MCF 10A (cell line): ENCODE measurements at regions of chr15 and their contacts with region 1.

Region 1: GRCh38 chr15:99565299-99566156 is at the start of gene MEF2A:
- DNase-seq: peak; percentile 90
- H3K4me3 Mint-ChIP-seq: peak within 1 kb of the TSS; percentile 98
- H3K27ac Mint-ChIP-seq: peak within 1 kb of the TSS; percentile 89
- H3K4me1 Mint-ChIP-seq: peaks cover 10% of the 10 kb centered on the region
- H3K27me3 Mint-ChIP-seq: no peaks in the 10 kb centered on the region
- CTCF ChIP-seq: no peak
- total RNA-seq, gene MEF2A: 52.9 and 55.2 TPM in 2 replicates

Region 2: GRCh38 chr15:99409097-99409473 is 156.4 kb before region 1 on chr15:
- CTCF ChIA-PET with region 1: interaction called, 7 read pairs
- POLR2A ChIA-PET with region 1: interaction called, 7 read pairs
- intact Hi-C with region 1: loop called (anchors 1 kb)
- DNase-seq: peak; percentile 74
- H3K4me3 Mint-ChIP-seq: no peak overlapping the region
- H3K27ac Mint-ChIP-seq: no peak overlapping the region
- H3K4me1 Mint-ChIP-seq: peaks cover 12% of the 10 kb centered on the region
- H3K27me3 Mint-ChIP-seq: no peaks in the 10 kb centered on the region
- CTCF ChIP-seq: peak; percentile 56

Region 3: GRCh38 chr15:99442252-99442897 is 123.2 kb before region 1 on chr15:
- CTCF ChIA-PET with region 1: no interaction called
- POLR2A ChIA-PET with region 1: interaction called, 14 read pairs
- intact Hi-C with region 1: no loop called
- DNase-seq: peak; percentile 90
- H3K4me3 Mint-ChIP-seq: peak overlapping the region; percentile 60
- H3K27ac Mint-ChIP-seq: peak overlapping the region; percentile 88
- H3K4me1 Mint-ChIP-seq: peaks cover 28% of the 10 kb centered on the region
- H3K27me3 Mint-ChIP-seq: no peaks in the 10 kb centered on the region
- CTCF ChIP-seq: no peak

Region 4: DNA sequence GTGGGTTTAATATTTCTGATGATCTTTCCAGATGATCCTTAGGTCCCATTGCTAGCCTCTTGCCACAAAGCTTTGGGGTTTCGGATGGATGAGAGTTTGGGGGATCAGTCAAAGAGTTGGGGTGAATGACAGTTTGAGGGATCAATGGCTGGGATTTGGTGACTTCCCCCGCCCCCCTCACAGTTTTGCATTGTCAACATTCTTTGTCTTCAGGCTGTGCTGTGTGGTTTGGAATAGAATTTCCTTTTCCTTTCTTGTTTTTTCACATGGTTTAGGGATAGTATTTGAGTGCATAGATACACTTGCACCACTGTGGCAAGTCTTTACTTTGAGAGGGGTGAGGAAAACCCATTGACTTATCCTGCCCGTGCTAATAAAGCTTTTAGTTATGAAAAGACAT is 14.5 kb after region 1 on chr15:
- CTCF ChIA-PET with region 1: no interaction called
- POLR2A ChIA-PET with region 1: interaction called, 11 read pairs
- intact Hi-C with region 1: no loop called
- DNase-seq: no peak
- H3K4me3 Mint-ChIP-seq: no peak overlapping the region
- H3K27ac Mint-ChIP-seq: peak overlapping the region; percentile 69
- H3K4me1 Mint-ChIP-seq: peaks cover 38% of the 10 kb centered on the region
- H3K27me3 Mint-ChIP-seq: no peaks in the 10 kb centered on the region
- CTCF ChIP-seq: no peak

Region 5: GRCh38 chr15:99704444-99704838 is 138.9 kb after region 1 on chr15:
- CTCF ChIA-PET with region 1: interaction called, 19 read pairs
- POLR2A ChIA-PET with region 1: interaction called, 25 read pairs
- intact Hi-C with region 1: loop called (anchors 1 kb)
- DNase-seq: peak; percentile 88
- H3K4me3 Mint-ChIP-seq: no peak overlapping the region
- H3K27ac Mint-ChIP-seq: peak overlapping the region; percentile 84
- H3K4me1 Mint-ChIP-seq: peaks cover 43% of the 10 kb centered on the region
- H3K27me3 Mint-ChIP-seq: no peaks in the 10 kb centered on the region
- CTCF ChIP-seq: peak; percentile 57